Natural killer cell (primary cell): ENCODE measurements at regions of chr20 and their contacts with region 1.

Region 1: GRCh38 chr20:57514273-57514751 is 10.6 kb downstream of the CTCFL start:
- DNase-seq: peak in 1 of 2 donors; percentile 61
- ATAC-seq: peak in 1 of 3 donors; percentile 52
- H3K4me3 ChIP-seq: no peak overlapping the region
- H3K4me3 Mint-ChIP-seq: no peak overlapping the region
- H3K27ac ChIP-seq: no peak overlapping the region
- H3K27ac Mint-ChIP-seq: no peak overlapping the region
- H3K4me1 ChIP-seq: no peaks in the 10 kb centered on the region
- H3K4me1 Mint-ChIP-seq: no peaks in the 10 kb centered on the region
- H3K27me3 ChIP-seq: no peaks in the 10 kb centered on the region
- H3K27me3 Mint-ChIP-seq: peaks cover 11% of the 10 kb centered on the region in 2 donors
- CTCF ChIP-seq: peak; percentile 36

Region 2: DNA sequence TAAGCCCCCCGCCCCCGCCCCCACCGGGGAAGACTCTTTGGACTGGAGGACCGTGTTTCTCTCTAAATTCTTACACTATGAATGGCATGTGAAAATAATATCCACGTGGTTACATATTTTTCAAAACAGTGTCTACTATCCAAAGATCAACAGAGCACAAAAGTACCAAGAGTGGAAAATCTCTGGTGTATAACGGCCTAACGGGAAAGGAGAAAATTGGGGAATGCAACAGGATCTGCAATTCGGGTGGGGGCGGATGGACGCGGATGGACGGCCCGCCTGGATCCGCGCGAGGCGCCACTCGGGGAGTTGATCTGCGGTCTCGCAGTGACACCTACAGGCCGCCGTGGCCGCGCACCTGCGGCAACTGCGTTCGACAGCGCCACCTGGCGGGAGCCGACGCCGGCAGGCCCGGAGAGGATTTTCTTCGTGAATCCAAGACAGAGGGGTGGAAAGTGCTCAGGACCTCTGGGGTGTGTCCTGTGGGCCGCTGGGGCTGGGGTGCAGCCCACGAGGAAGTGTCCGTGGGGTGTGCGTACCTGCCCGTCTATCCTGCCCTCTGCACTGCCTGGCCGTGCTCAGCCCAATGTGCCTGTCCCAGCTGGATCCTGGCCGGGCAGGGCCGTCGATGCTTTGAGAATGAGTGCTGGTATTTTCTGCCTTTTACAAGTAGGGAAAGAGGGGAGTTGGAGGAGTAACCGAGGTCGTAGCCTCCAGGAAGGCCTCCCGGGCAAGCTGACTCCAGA is 695.5 kb after region 1 on chr20:
- intact Hi-C with region 1: loop called (anchors 5 kb)
- DNase-seq: peak; percentile 87 to 93
- ATAC-seq: peak; percentile 92 to 99 (median 98)
- H3K4me3 ChIP-seq: no peak overlapping the region
- H3K4me3 Mint-ChIP-seq: no peak overlapping the region
- H3K27ac ChIP-seq: no peak overlapping the region
- H3K27ac Mint-ChIP-seq: peak overlapping the region; percentile 5 to 75
- H3K4me1 ChIP-seq: peaks cover 6% of the 10 kb centered on the region
- H3K4me1 Mint-ChIP-seq: peaks cover 0 to 6% of the 10 kb centered on the region in 2 donors
- H3K27me3 ChIP-seq: no peaks in the 10 kb centered on the region
- H3K27me3 Mint-ChIP-seq: peaks cover 8 to 22% of the 10 kb centered on the region in 2 donors
- CTCF ChIP-seq: peak; percentile 100